ENCODE measurements at regions of chrX and their contacts with region 1.

Region 1: GRCh38 chrX:33434256-33435092 is 223.1 kb upstream of the DMD start:
- DNase-seq: no peak

Region 2: GRCh38 chrX:34299451-34299967 is 865.0 kb after region 1 on chrX:
- intact Hi-C with region 1: loop called (anchors 10 kb)
- DNase-seq: no peak